CD8-positive, alpha-beta memory T cell (primary cell): ENCODE measurements at regions of chr1 and their contacts with region 1.

Region 1: GRCh38 chr1:211133836-211134669 is at the start of gene KCNH1:
- DNase-seq: peak; percentile 56 to 83 (median 75)
- H3K4me3 ChIP-seq: peak within 1 kb of the TSS; percentile 30
- H3K4me3 Mint-ChIP-seq: peak within 1 kb of the TSS; percentile 20 to 89 (median 73)
- H3K27ac ChIP-seq: no peak within 1 kb of the TSS
- H3K27ac Mint-ChIP-seq: no peak within 1 kb of the TSS
- H3K4me1 ChIP-seq: peaks cover 6% of the 10 kb centered on the region
- H3K4me1 Mint-ChIP-seq: peaks cover 5 to 13% (median 11%) of the 10 kb centered on the region in 3 donors
- H3K27me3 ChIP-seq: peaks cover 10% of the 10 kb centered on the region
- H3K27me3 Mint-ChIP-seq: peaks cover 30 to 63% of the 10 kb centered on the region in 2 donors
- total RNA-seq, gene KCNH1: not detected

Region 2: DNA sequence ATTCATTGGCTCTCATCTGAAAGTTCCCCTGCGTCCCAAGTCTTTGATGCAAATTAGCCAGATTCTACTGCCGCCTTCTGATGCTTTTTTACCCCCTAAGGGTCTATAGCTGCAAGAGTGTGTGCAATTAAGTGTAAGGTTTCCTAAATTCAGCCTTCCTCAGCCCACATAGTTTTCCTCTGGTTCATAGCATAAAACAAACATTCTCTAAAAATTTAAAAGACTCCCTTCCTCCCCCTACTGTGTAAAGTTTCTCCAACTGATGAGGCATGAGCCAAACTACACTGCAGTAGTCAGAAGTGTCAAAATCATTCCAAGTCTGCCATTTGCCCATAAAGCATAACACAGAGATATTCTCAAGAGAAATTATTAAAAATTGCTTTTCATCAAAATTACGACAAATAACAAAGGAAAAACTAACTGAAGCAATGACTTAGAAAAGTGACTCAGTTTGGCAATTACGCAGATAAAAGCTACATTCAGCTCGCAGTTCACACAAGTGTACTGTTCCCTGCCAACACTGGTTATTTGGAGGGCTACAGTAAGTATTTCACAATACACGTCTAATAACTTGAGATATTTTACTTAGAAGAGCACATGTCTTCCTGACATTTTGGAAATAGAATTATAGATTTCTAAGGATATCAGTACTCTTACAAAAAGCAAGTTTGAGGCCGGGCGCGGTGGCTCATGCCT is 15.5 kb before region 1 on chr1:
- CTCF ChIA-PET with region 1: interaction called, 19 read pairs
- POLR2A ChIA-PET with region 1: no interaction called
- DNase-seq: no peak
- H3K4me3 ChIP-seq: no peak overlapping the region
- H3K4me3 Mint-ChIP-seq: no peak overlapping the region
- H3K27ac ChIP-seq: no peak overlapping the region
- H3K27ac Mint-ChIP-seq: no peak overlapping the region
- H3K4me1 ChIP-seq: no peaks in the 10 kb centered on the region
- H3K4me1 Mint-ChIP-seq: no peaks in the 10 kb centered on the region
- H3K27me3 ChIP-seq: peaks cover 9% of the 10 kb centered on the region
- H3K27me3 Mint-ChIP-seq: peaks cover 25 to 73% of the 10 kb centered on the region in 2 donors

Region 3: GRCh38 chr1:211145944-211146343 is 11.9 kb after region 1 on chr1:
- CTCF ChIA-PET with region 1: interaction called, 11 read pairs
- POLR2A ChIA-PET with region 1: no interaction called
- DNase-seq: no peak
- H3K4me3 ChIP-seq: no peak overlapping the region
- H3K4me3 Mint-ChIP-seq: no peak overlapping the region
- H3K27ac ChIP-seq: no peak overlapping the region
- H3K27ac Mint-ChIP-seq: no peak overlapping the region
- H3K4me1 ChIP-seq: no peaks in the 10 kb centered on the region
- H3K4me1 Mint-ChIP-seq: no peaks in the 10 kb centered on the region
- H3K27me3 ChIP-seq: no peaks in the 10 kb centered on the region
- H3K27me3 Mint-ChIP-seq: peaks cover 29 to 61% of the 10 kb centered on the region in 2 donors